Posterior vena cava (tissue), 2 donors: ENCODE measurements at regions of chr2 and their contacts with region 1.

Region 1: GRCh38 chr2:70024284-70024994 is 62.8 kb upstream of the PCBP1 start:
- DNase-seq: no peak

Region 2: DNA sequence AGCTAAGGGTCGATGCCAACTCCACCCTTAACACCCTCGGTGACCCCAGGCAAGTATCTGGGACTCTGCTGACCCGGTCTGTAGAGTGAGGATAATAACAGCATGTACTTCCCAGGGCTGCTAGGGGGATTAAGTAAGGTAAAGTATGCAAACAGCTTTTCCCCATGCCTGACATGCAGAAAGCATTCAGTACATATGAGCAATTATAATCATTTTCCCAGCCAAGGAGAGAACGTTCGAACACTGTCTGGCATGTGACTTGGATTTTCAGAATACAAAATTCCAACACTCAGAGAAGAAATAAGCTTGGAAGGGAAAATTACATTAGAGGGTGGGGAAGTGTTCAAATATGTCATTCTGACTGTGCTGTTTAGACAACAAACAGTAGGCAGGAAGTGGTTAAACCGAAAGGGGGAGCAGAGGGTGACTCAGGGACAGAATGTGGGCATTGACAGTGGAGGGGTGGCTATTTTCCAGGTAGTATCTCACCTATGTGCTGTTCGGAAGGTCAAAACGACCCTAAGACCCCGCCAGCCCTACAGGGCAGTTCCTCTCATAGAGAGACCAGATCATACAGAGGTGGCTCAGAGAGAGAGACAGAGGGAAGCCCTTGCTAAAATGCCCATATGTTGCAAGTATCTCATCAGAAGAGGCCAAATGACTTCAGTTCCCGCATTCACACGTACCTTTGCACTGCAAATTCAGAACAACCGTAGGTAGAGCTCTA is 77.9 kb before region 1 on chr2:
- intact Hi-C with region 1: loop called in 1 of 2 experiments (anchors 5 kb)
- DNase-seq: no peak